Heart right ventricle (tissue), 16 donors: ENCODE measurements at regions of chr15 and their contacts with region 1.

Region 1: DNA sequence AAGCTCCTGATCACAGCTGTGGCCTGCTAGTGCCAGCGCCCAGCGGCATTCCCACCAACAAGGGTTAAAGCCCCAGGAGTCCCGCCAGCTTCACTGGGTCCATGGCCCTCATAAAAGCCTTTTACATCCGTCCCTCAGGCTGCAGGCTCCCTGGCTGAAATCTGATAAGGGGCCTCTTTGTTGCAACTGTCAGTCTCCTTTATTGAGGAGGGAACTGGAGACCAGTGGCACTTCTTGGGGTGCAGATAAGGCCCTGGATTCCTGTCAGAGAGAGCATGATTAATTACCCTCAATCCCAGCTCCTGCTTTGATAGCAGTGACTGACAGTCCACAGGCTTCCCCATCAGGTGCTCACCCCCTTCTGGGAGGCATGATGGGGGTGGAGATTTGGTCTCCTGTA is 30.9 kb upstream of the CLK3 start:
- DNase-seq: no peak
- ATAC-seq: no peak
- H3K4me3 ChIP-seq: no peak overlapping the region
- H3K27ac ChIP-seq: no peak overlapping the region
- H3K4me1 ChIP-seq: peaks cover 0 to 30% (median 15%) of the 10 kb centered on the region in 9 donors
- H3K27me3 ChIP-seq: no peaks in the 10 kb centered on the region
- CTCF ChIP-seq: no peak

Region 2: DNA sequence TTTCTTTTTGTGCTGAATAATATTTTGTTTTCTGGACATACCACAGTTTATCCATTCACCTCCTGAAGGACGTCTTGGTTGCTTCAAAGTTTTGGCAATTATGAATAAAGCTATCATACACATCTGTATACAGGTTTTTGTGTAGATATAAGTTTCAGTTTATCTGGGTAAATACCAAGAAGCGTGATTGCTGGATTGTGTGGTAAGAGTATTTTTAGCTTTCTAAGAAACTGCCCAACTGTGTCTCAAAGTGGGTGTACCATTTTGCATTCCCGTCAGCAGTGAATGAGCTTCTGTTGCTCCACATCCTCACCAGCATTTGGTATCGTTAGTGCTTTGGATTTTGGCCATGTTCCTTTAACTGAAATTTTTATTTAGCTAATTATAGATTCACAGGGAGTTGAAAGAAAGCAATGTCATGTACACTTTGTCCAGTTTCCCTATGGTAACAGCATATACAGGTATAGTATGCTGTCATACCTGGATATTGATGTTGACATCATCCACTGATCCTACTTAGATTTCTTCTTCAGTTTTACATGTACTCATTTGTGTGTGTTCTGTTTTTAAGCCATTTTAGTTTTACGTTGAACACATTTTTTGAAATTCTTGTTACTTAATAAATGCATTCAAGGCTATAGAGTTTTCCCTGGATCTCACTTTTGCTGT is 31.9 kb before region 1 on chr15:
- intact Hi-C with region 1: loop called in 1 of 10 experiments (anchors 5 kb)
- DNase-seq: no peak
- ATAC-seq: no peak
- H3K4me3 ChIP-seq: no peak overlapping the region
- H3K27ac ChIP-seq: no peak overlapping the region
- H3K4me1 ChIP-seq: peaks cover 0 to 14% (median 8%) of the 10 kb centered on the region in 9 donors
- H3K27me3 ChIP-seq: no peaks in the 10 kb centered on the region
- CTCF ChIP-seq: no peak

Region 3: GRCh38 chr15:75249726-75250125 is 664.9 kb after region 1 on chr15:
- intact Hi-C with region 1: no loop called
- DNase-seq: no peak
- ATAC-seq: no peak
- H3K4me3 ChIP-seq: no peak overlapping the region
- H3K27ac ChIP-seq: no peak overlapping the region
- H3K4me1 ChIP-seq: no peaks in the 10 kb centered on the region
- H3K27me3 ChIP-seq: peaks cover 0 to 41% (median 25%) of the 10 kb centered on the region in 7 donors
- CTCF ChIP-seq: no peak